Prostate gland (tissue), 2 donors: ENCODE measurements at regions of chr20 and their contacts with region 1.

Region 1: GRCh38 chr20:22312744-22313346 is 271.5 kb downstream of the FOXA2 start:
- DNase-seq: peak; percentile 11
- H3K4me3 ChIP-seq: no peak overlapping the region
- H3K27ac ChIP-seq: no peak overlapping the region
- H3K4me1 ChIP-seq: no peaks in the 10 kb centered on the region
- H3K27me3 ChIP-seq: peaks cover 3% of the 10 kb centered on the region
- CTCF ChIP-seq: peak; percentile 15 to 47 (median 32)
- POLR2A ChIP-seq: no peak

Region 2: DNA sequence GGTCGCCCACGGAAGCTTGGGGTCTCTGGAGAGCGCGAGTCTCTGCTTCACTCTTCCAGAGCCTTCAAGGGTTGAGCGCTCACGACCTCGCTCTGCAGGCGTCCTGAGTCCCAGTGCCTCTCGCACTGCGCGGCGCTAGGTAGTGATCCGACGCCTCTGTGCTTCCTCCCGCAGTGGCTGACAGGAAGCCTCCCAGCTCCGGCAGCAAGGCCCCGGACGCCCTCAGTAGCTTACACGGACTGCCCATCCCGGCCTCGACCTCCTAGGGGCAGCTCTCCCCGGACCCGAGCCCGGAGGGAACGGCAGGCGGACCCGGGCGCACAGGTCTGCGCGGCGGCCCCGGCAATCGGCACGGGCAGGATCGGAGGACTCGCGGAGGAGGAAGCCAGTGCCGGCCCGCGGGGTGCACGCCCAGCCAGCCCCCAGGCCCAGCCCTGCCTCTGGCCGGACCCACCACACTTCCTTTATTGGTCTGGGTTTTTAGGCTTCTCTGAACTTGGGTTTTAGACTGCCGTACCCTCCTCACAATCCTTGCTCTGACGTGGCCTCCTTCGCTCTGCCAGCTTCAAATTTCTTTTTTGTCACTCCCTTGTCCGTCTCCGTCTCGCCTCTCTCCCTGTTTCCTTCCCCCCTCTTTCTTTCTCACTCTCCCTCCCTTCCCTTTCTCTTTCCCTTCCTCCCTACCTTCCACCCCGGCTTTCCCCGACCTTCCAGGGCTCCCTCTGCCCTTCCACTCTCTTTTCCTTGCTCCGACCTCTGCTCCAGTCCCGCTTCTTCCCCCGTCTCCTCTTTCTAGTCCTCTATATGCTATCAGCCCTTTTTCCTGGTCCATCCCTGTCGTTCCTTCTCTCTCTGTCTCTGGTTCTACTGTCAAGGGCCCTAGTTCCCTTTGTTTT is 598.3 kb before region 1 on chr20:
- intact Hi-C with region 1: loop called (anchors 5 kb)
- DNase-seq: no peak
- H3K4me3 ChIP-seq: no peak overlapping the region
- H3K27ac ChIP-seq: no peak overlapping the region
- H3K4me1 ChIP-seq: no peaks in the 10 kb centered on the region
- H3K27me3 ChIP-seq: peaks cover 25% of the 10 kb centered on the region
- CTCF ChIP-seq: no peak
- POLR2A ChIP-seq: no peak